ENCODE measurements at regions of chr3 and their contacts with region 1.

Region 1: DNA sequence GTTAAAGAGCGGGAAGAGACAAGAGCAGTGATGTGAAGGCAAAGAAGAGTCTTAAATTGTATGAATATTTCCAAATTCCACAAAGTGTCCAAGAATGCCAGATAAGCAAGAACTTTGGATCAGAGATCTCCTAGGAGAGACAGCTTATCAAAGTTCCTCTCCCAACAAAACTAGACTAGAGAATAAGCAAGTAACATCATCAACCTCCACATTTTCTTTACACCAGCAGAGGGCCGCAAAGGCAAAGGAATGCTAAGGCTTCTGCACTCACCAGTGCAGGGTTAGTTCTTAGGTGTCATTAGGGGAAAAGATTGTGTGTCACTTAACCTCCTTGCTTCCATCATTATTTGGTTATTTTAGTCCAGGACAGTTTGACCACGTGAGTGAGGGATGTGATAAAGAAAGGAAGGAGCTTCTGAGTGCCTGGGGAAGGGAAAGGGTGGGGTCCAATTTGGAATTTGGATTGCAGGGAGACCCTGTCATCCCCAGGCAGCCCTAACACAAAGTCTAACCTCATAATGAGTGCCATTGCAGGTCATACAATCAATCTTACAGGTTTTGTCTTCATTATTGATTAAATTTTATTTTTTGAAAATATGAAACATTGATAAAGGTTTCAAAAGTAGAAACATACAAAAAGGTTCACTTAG is 7.5 kb upstream of the CMTM6 start:
- DNase-seq: no peak
- ATAC-seq: peak; percentile 96
- H3K4me3 Mint-ChIP-seq: no peak overlapping the region
- H3K27ac Mint-ChIP-seq: peak overlapping the region; percentile 47
- H3K4me1 Mint-ChIP-seq: peaks cover 5% of the 10 kb centered on the region
- H3K27me3 Mint-ChIP-seq: no peaks in the 10 kb centered on the region
- CTCF ChIP-seq: peak; percentile 42

Region 2: GRCh38 chr3:32593903-32594525 is 83.8 kb after region 1 on chr3:
- CTCF ChIA-PET with region 1: interaction called, 9 read pairs
- POLR2A ChIA-PET with region 1: interaction called, 3 read pairs
- intact Hi-C with region 1: loop called (anchors 1 kb)
- DNase-seq: no peak
- ATAC-seq: no peak
- H3K4me3 Mint-ChIP-seq: no peak overlapping the region
- H3K27ac Mint-ChIP-seq: no peak overlapping the region
- H3K4me1 Mint-ChIP-seq: no peaks in the 10 kb centered on the region
- H3K27me3 Mint-ChIP-seq: peaks cover 8% of the 10 kb centered on the region
- CTCF ChIP-seq: no peak

Region 3: DNA sequence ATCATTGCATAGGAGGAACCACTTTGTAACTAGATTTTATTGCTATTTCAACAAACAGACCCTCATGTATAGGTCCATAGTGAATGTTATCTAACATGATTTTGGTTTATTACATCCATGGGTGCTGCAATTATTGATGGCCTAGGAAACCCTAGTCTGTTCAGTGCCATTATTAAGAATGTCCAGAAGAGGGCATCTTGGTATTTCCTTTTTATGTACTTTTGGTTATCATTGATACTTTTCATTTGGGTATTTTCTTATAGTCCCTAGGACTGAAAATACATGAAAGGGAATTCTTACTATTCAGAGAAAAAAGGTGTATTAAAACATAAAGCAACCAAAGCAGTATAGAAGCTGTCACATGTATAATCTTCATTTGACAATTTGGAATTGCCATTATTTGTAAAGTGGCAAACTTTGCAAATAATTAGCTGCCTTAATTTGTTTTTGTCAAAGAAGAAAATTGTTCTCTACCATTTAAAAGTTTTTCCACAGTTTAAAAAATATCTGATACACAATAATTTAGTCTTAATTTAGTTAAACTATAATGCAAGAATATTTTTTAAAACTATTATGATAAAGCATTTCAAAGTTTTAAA is 223.5 kb after region 1 on chr3:
- CTCF ChIA-PET with region 1: no interaction called
- POLR2A ChIA-PET with region 1: no interaction called
- intact Hi-C with region 1: loop called (anchors 2 kb)
- DNase-seq: no peak
- ATAC-seq: no peak
- H3K4me3 Mint-ChIP-seq: no peak overlapping the region
- H3K27ac Mint-ChIP-seq: no peak overlapping the region
- H3K4me1 Mint-ChIP-seq: no peaks in the 10 kb centered on the region
- H3K27me3 Mint-ChIP-seq: no peaks in the 10 kb centered on the region
- CTCF ChIP-seq: no peak

Region 4: DNA sequence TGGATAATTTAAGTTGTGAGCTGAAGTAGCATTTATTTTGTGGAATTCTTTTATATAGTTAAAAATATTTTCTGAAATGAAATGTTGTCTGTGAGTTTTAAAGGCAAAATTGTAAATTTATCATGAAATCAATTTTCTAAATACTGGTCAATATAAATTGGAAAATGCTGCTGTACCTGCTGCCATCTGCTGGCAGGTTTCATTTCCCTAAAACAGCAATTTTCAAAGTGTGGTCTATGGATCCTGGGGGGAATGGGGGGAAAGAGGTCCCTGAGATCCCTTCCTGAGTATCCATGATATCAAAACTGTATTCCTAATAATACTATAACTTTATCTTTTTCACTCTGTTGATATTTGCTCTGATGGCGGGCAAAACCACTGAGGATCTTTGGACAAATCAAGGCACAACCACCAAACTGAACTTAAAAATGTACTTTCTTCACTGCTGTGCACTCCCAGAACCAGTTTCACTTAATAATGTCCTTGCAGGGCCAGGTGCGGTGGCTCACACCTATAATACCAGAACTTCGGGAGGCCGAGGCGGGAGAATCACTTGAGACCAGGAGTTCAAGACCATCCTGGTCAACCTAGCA is 424.0 kb after region 1 on chr3:
- CTCF ChIA-PET with region 1: interaction called, 3 read pairs
- POLR2A ChIA-PET with region 1: no interaction called
- intact Hi-C with region 1: loop called (anchors 1 kb)
- DNase-seq: no peak
- ATAC-seq: no peak
- H3K4me3 Mint-ChIP-seq: no peak overlapping the region
- H3K27ac Mint-ChIP-seq: no peak overlapping the region
- H3K4me1 Mint-ChIP-seq: no peaks in the 10 kb centered on the region
- H3K27me3 Mint-ChIP-seq: peaks cover 9% of the 10 kb centered on the region
- CTCF ChIP-seq: no peak

Region 5: DNA sequence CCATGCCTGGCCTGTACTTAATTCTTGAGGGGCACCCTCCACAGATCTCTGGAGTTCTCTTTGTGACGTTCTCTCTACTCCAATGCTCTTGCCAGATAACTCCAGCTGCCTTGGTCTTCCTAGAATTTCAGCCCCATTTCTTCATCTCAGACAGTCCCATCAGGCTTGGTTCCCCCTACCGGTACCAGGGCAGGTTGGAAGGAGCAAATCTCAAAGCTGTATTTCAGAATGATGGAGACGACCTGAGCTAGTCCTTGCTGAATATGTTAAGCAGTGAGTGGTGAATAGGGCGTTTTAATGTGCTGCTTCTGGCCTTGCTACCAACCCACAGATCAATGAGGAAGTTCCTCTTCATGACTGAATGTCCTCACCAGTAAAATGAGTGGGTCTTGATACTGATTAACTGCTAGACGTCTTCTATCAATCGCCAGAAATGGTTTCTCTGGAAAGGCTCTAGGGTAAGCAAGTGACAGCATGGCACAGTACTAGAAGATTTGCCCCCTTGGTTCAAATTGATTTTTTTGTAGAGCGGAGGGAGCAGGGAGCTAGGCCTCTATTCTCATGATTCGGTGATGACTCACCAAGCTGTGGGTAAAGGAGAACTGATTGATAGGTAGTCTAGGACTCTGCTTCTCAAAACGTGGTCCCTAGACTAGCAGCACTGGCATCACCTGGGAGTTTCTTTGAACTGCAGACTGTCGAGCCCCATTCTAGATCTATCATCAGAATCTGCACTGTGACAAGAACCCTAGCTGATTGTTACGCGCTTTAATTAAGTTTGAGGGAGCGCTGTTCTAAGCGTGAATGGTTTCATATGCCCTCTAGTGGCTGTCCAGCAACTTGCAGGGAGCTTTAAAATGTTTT is 862.2 kb after region 1 on chr3:
- CTCF ChIA-PET with region 1: no interaction called
- POLR2A ChIA-PET with region 1: no interaction called
- intact Hi-C with region 1: loop called (anchors 10 kb)
- DNase-seq: no peak
- ATAC-seq: peak; percentile 54
- H3K4me3 Mint-ChIP-seq: no peak overlapping the region
- H3K27ac Mint-ChIP-seq: no peak overlapping the region
- H3K4me1 Mint-ChIP-seq: peaks cover 2% of the 10 kb centered on the region
- H3K27me3 Mint-ChIP-seq: peaks cover 4% of the 10 kb centered on the region
- CTCF ChIP-seq: peak; percentile 80

Measured in activated B cell treated with CpG ODN at 0.5 μM for 24 hours (primary cell).